ENCODE measurements at regions of chr16 and their contacts with region 1.

Region 1: DNA sequence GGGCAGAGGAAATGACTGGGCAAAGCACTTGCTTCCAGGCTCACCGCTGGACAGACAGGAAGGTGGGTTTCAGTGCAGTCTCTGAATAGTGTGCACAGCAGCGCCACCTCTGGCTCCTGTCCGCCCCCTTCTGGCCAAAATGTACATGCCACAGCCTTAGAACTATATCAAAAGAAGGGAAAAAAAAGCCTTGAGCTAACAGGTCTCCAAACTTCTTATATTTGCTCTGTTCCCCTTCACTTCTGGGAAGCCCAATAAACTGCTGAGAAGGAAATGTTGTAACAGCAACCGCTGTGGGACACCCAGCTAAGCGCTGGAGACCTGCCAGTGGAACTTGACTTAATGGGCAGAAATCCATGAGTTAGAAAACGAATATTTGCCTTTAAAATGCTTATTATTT is 17.5 kb downstream of the COG7 start:
- DNase-seq: peak; percentile 71
- H3K4me3 Mint-ChIP-seq: no peak overlapping the region
- H3K27ac Mint-ChIP-seq: no peak overlapping the region
- H3K4me1 Mint-ChIP-seq: no peaks in the 10 kb centered on the region
- H3K27me3 Mint-ChIP-seq: no peaks in the 10 kb centered on the region
- CTCF ChIP-seq: peak; percentile 88

Region 2: GRCh38 chr16:22898874-22899348 is 536.6 kb before region 1 on chr16:
- CTCF ChIA-PET with region 1: interaction called, 5 read pairs
- POLR2A ChIA-PET with region 1: no interaction called
- intact Hi-C with region 1: loop called (anchors 1 kb)
- DNase-seq: peak; percentile 84
- H3K4me3 Mint-ChIP-seq: no peak overlapping the region
- H3K27ac Mint-ChIP-seq: no peak overlapping the region
- H3K4me1 Mint-ChIP-seq: no peaks in the 10 kb centered on the region
- H3K27me3 Mint-ChIP-seq: peaks cover 2% of the 10 kb centered on the region
- CTCF ChIP-seq: peak; percentile 82

Region 3: DNA sequence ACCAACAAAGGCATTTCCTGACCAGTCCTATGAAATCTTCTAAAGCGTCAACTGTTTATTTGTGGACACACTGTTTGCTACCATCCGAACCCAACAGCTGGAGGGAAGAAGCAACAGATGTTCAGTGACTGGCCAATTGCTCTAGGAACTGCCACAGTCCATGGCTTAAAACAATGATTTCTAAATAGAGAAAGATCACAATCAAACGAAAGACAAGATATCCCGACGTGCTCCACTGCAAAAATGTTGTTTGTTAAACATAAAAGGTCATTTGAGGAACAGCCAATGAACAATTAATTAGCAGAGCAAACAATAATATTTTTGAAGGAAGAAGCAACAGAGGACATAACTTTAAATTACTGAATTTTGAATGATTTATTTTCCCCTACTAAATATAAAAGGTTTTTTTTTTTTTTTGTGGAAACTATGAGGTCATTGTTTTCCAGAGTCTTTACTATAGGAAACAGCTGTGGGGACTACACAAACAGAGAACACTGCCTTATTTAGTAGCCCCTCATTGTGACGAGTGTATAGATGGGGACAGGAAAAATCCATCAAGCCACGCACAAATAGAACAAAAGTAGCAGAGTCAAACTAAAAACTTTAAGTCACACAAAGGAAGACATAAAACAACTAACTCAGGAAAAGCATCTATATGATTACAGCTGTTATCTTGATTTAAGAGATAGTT is 303.4 kb before region 1 on chr16:
- CTCF ChIA-PET with region 1: no interaction called
- POLR2A ChIA-PET with region 1: no interaction called
- intact Hi-C with region 1: no loop called
- DNase-seq: no peak
- H3K4me3 Mint-ChIP-seq: no peak overlapping the region
- H3K27ac Mint-ChIP-seq: no peak overlapping the region
- H3K4me1 Mint-ChIP-seq: peaks cover 18% of the 10 kb centered on the region
- H3K27me3 Mint-ChIP-seq: no peaks in the 10 kb centered on the region
- CTCF ChIP-seq: no peak

Region 4: DNA sequence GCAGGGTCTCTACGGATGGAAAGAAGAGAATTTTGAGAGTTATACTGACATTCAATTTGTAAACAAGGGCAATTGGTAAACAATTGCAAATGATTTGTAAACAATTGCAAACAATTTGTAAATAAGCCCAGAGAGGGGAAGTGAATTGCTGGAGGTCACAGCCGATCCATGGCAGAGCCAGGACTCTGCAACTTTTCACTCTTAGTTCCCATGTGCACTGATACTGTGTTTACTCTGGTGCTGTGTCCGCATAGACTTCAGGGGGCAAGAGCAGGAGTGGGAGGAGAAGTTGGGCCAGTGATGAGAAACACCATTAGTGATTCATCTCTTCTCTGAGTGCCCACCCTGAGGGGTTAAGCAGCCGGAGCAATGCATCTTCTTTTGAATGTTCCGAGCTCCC is 239.0 kb before region 1 on chr16:
- CTCF ChIA-PET with region 1: interaction called, 516 read pairs
- POLR2A ChIA-PET with region 1: interaction called, 4 read pairs
- intact Hi-C with region 1: no loop called
- DNase-seq: no peak
- H3K4me3 Mint-ChIP-seq: no peak overlapping the region
- H3K27ac Mint-ChIP-seq: no peak overlapping the region
- H3K4me1 Mint-ChIP-seq: peaks cover 6% of the 10 kb centered on the region
- H3K27me3 Mint-ChIP-seq: no peaks in the 10 kb centered on the region
- CTCF ChIP-seq: no peak

Region 5: DNA sequence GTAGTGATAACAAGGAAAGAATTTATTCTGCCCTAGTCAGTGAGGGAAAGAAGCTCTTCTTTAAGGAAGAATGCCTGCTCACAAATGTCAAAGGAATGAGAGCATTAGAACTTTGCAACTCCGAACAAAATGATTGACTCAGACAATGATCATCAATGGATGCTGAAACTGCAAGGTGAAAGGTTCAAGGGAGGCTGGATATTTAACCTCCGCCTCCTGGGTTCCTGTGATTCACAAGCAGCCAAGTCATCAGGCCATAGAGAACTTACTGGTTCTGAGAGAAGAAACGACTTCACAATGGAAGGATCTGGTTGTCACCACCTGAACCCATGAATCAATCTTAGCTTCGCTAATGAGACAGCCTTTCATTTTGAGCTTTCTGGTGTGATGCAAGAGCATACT is 149.4 kb before region 1 on chr16:
- CTCF ChIA-PET with region 1: interaction called, 54 read pairs
- POLR2A ChIA-PET with region 1: interaction called, 5 read pairs
- intact Hi-C with region 1: loop called (anchors 10 kb)
- DNase-seq: peak; percentile 68
- H3K4me3 Mint-ChIP-seq: no peak overlapping the region
- H3K27ac Mint-ChIP-seq: peak overlapping the region; percentile 59
- H3K4me1 Mint-ChIP-seq: peaks cover 16% of the 10 kb centered on the region
- H3K27me3 Mint-ChIP-seq: no peaks in the 10 kb centered on the region
- CTCF ChIP-seq: no peak

Region 6: GRCh38 chr16:23310744-23311143 is 124.8 kb before region 1 on chr16:
- CTCF ChIA-PET with region 1: interaction called, 16 read pairs
- POLR2A ChIA-PET with region 1: interaction called, 3 read pairs
- intact Hi-C with region 1: no loop called
- DNase-seq: no peak
- H3K4me3 Mint-ChIP-seq: no peak overlapping the region
- H3K27ac Mint-ChIP-seq: no peak overlapping the region
- H3K4me1 Mint-ChIP-seq: peaks cover 11% of the 10 kb centered on the region
- H3K27me3 Mint-ChIP-seq: no peaks in the 10 kb centered on the region
- CTCF ChIP-seq: no peak

Region 7: GRCh38 chr16:23416816-23417215 is 18.7 kb before region 1 on chr16:
- CTCF ChIA-PET with region 1: interaction called, 26 read pairs
- POLR2A ChIA-PET with region 1: no interaction called
- intact Hi-C with region 1: no loop called
- DNase-seq: no peak
- H3K4me3 Mint-ChIP-seq: no peak overlapping the region
- H3K27ac Mint-ChIP-seq: no peak overlapping the region
- H3K4me1 Mint-ChIP-seq: peaks cover 6% of the 10 kb centered on the region
- H3K27me3 Mint-ChIP-seq: no peaks in the 10 kb centered on the region
- CTCF ChIP-seq: no peak

Measured in MCF 10A (cell line).